Brain microvascular endothelial cell (primary cell): ENCODE measurements at regions of chr4 and their contacts with region 1.

Region 1: GRCh38 chr4:150593996-150594395 is 12.0 kb downstream of the MAB21L2 start:
- DNase-seq: no peak
- H3K4me3 ChIP-seq: no peak overlapping the region
- H3K27ac ChIP-seq: no peak overlapping the region
- H3K27me3 ChIP-seq: no peaks in the 10 kb centered on the region
- CTCF ChIP-seq: peak; percentile 23

Region 2: GRCh38 chr4:150302553-150302952 is 291.4 kb before region 1 on chr4:
- in situ Hi-C with region 1: loop called (anchors 25 kb)
- DNase-seq: peak; percentile 96
- H3K4me3 ChIP-seq: no peak overlapping the region
- H3K27ac ChIP-seq: peak overlapping the region; percentile 68
- H3K27me3 ChIP-seq: no peaks in the 10 kb centered on the region
- CTCF ChIP-seq: no peak